ENCODE measurements at regions of chr9 and their contacts with region 1.

Region 1: DNA sequence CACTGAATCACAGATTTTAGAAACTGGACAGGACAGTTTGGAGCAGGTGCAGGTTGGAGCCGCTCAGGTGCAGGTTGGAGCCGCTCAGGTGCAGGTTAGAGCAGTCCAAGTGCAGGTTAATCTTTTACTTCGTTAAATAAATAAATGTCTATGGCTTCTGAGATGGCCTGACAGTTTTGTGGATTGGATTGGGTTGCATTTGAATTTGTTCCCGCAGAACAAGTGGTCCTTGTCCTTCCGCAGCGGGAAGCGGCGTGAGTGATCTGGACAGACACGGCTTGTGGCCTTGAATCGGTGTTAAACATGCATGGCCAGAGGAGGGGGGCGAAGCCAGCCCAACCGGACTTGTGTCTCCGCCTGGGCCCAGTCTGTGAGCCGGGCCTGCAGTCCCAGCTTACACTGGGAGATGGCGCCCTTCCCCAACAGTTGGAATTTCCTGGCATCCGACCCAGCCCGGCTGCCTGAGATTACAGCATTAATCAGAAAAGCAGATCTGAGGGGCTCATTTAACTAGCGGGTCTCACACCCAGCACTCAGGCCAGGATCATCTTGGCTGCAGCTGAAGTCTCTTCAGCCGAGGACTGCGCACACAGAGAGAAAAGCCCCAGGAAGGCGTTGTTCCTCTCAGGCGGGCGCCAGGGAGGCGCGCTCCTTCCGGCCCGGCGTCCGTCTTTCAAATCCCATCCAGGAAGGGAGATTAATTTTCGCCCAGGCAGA is 1.5 kb upstream of the OLFM1 start:
- DNase-seq: peak; percentile 76 to 87
- ATAC-seq: peak; percentile 75 to 84 (median 80)
- H3K4me3 ChIP-seq: peak overlapping the region; percentile 63
- H3K27ac ChIP-seq: no peak overlapping the region
- H3K4me1 ChIP-seq: peaks cover 9% of the 10 kb centered on the region
- H3K27me3 ChIP-seq: peaks cover 0 to 29% (median 1%) of the 10 kb centered on the region in 3 donors
- CTCF ChIP-seq: peak; percentile 98

Region 2: GRCh38 chr9:135137398-135137832 is 51.4 kb after region 1 on chr9:
- intact Hi-C with region 1: no loop called
- DNase-seq: no peak
- ATAC-seq: peak in 1 of 4 donors; percentile 36
- H3K4me3 ChIP-seq: no peak overlapping the region
- H3K27ac ChIP-seq: no peak overlapping the region
- H3K4me1 ChIP-seq: peaks cover 14% of the 10 kb centered on the region
- H3K27me3 ChIP-seq: no peaks in the 10 kb centered on the region
- CTCF ChIP-seq: no peak

Region 3: GRCh38 chr9:135255033-135255840 is 169.2 kb after region 1 on chr9:
- intact Hi-C with region 1: loop called in 1 of 2 experiments (anchors 5 kb)
- DNase-seq: peak in 1 of 2 donors; percentile 6
- ATAC-seq: peak in 3 of 4 donors; percentile 34 to 49 (median 37)
- H3K4me3 ChIP-seq: no peak overlapping the region
- H3K27ac ChIP-seq: no peak overlapping the region
- H3K4me1 ChIP-seq: no peaks in the 10 kb centered on the region
- H3K27me3 ChIP-seq: peaks cover 0 to 30% (median 6%) of the 10 kb centered on the region in 3 donors
- CTCF ChIP-seq: no peak

Region 4: DNA sequence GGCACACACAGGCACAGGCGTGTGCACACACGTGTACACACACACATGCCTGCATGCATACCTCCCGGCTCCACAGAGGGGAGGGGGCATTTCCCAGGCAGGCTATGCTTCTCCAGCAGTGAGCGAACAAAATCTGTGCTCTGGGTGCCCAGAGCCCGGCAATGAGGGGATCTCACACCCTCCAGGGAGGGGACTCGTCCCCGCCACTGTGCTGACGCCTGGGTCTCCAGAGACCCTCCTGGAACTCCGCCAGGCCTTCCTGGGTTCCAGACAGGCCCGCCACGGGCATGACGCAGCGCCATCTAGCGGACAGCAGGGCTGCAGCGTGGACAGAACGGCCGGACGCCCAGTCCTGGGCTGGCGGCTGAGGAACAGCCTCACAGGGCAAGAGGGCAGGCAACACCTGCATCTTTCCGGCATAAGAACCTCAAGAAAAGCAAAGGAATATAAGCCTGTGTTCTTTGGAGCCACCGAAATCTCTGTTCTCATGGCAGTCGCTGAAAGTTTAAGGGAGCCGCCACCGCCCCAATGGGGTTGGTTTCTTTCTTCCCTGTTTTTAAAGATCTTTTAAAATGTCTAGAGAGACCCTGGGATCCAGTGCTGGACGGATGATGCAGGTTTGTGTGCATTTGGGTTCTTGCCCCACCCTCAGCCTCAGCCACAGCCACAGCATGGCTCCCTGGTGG is 258.0 kb after region 1 on chr9:
- intact Hi-C with region 1: loop called (anchors 1 kb)
- DNase-seq: peak; percentile 57 to 84
- ATAC-seq: peak; percentile 60 to 74 (median 66)
- H3K4me3 ChIP-seq: no peak overlapping the region
- H3K27ac ChIP-seq: no peak overlapping the region
- H3K4me1 ChIP-seq: no peaks in the 10 kb centered on the region
- H3K27me3 ChIP-seq: peaks cover 0 to 48% (median 12%) of the 10 kb centered on the region in 3 donors
- CTCF ChIP-seq: peak; percentile 85

Region 5: GRCh38 chr9:135410831-135411473 is 325.0 kb after region 1 on chr9:
- intact Hi-C with region 1: loop called (anchors 1 to 2 kb)
- DNase-seq: no peak
- ATAC-seq: no peak
- H3K4me3 ChIP-seq: no peak overlapping the region
- H3K27ac ChIP-seq: no peak overlapping the region
- H3K4me1 ChIP-seq: no peaks in the 10 kb centered on the region
- H3K27me3 ChIP-seq: peaks cover 0 to 29% (median 9%) of the 10 kb centered on the region in 3 donors
- CTCF ChIP-seq: no peak